Ovary (tissue), 10 donors: ENCODE measurements at regions of chr16 and their contacts with region 1.

Region 1: GRCh38 chr16:50548125-50548908 is at the start of gene NKD1:
- DNase-seq: peak; percentile 80 to 86 (median 84)
- H3K4me3 ChIP-seq: peak within 1 kb of the TSS; percentile 74
- H3K27ac ChIP-seq: peak within 1 kb of the TSS; percentile 51 to 68
- H3K4me1 ChIP-seq: peaks cover 4% of the 10 kb centered on the region
- H3K27me3 ChIP-seq: no peaks in the 10 kb centered on the region
- CTCF ChIP-seq: no peak
- EP300 ChIP-seq: no peak
- POLR2A ChIP-seq: peak; percentile 56
- total RNA-seq, gene NKD1: 3.3 to 72.1 (median 17.4) TPM

Region 2: DNA sequence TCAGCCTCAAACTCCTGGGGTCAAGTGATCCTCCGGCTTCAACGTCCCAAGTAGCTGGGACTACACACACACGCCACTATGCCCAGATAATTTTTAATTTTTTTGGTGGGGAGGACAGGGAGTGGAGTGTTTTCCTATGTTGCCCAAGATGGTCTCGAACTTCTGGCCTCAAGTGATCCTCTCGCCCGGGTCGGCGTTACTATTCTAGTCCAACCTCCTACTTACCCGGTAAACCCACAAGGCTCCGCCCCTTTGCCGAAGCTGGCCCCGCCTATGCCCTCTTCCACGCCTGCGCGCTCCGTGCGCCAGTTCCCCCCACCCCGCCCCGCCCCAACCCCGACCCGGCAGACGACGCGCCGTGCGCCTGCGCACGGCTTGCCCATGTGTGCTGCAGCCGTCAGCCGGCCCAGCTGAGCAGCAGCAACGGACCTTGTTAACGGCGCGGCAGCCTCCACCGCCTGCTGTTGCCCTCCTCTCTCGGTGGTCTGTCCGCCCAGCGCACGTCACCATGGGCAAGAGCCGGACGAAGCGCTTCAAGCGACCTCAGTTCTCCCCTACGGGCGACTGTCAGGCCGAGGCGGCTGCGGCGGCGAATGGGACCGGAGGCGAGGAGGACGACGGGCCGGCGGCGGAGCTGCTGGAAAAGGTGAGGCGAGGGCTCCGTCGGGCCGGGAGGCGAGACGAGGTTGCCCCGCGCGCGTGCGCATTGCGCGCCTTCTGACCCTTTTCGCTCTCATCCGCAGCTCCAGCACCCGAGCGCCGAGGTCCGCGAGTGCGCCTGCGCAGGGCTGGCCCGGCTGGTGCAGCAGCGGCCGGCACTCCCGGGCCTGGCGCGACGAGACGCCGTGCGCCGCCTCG is 482.5 kb before region 1 on chr16 and contains the start of gene HEATR3:
- intact Hi-C with region 1: loop called in 1 of 4 experiments (anchors 5 kb)
- DNase-seq: peak; percentile 91 to 97 (median 94)
- H3K4me3 ChIP-seq: peak within 1 kb of the TSS; percentile 76
- H3K27ac ChIP-seq: peak within 1 kb of the TSS; percentile 84 to 90
- H3K4me1 ChIP-seq: peaks cover 1% of the 10 kb centered on the region
- H3K27me3 ChIP-seq: no peaks in the 10 kb centered on the region
- CTCF ChIP-seq: no peak
- EP300 ChIP-seq: peak; percentile 18
- POLR2A ChIP-seq: no peak
- total RNA-seq, gene HEATR3: 7.6 to 15.2 (median 10.7) TPM

Region 3: DNA sequence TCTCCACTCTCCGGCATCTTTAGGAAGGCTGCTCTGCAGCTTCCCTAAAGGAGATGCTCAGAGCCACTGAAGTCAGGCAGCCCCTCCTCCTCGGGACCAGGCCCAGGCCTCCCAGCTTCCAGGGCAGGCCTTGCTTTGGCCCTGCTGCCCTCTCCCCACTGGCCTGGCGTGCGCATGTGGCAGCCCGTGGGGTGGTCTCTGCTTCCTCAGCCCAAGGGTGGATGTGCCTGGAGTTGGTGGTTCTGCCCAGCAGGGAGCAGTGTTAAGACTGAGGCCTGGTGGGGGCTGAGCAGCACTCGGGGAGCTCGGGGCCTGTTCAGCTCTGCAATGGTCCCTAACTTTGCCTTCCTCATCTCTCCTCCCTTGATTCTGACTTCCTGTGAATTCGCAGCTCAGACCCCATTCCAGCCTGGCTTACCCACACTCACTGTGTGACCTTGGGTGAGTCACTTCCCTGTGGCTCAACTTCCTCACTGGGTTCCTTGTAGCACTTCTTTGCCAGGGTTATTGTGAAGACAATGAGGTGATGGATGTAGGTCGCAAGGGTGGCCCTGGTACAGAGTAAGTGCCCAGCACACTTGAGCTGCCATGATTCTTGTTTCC is 63.1 kb after region 1 on chr16:
- intact Hi-C with region 1: loop called in 1 of 4 experiments (anchors 5 kb)
- DNase-seq: no peak
- H3K4me3 ChIP-seq: no peak overlapping the region
- H3K27ac ChIP-seq: no peak overlapping the region
- H3K4me1 ChIP-seq: peaks cover 24% of the 10 kb centered on the region
- H3K27me3 ChIP-seq: no peaks in the 10 kb centered on the region
- CTCF ChIP-seq: no peak
- EP300 ChIP-seq: no peak
- POLR2A ChIP-seq: no peak

Region 4: DNA sequence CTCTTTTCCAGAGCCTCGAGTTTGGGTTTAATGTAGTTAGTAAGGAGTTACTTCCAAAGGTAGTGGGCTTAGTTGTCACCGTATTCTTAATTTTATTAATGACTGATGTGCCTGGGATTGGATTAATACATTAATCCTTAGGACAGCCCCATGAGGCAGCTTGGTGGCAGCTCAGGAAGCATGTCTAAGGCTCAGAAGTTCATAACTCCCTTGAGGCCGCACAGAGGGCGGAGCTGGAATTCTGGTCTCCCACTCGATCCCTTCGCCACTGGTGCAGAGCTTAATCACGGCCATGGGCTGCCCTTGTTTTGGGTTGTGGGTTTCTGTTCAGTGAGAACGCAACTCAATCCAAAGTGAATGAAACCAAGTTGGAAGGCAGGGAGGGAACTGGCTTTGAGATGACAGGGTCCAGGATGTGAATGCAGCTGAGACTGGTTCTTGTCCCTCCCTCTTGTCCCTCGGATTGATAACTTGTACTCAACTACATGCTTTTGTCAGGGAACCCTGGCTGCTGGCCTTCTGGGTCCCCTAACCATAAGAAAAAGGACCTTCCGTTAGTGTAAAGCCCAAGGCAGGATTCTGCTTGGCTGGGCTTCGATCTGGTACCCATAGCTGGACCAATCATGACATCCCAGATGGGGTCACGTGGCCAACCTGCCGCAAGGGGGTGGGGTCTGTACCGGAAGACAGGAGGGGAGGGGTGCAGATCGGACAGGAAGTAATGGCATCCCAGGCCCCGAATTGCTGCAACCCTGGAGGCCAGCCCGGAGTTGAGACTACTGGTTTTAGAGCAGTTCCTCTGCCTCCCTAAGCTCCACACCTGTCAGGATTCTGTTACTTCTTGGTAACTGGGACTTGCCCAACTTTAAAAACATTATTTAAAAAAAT is 87.4 kb after region 1 on chr16:
- intact Hi-C with region 1: loop called in 1 of 4 experiments (anchors 5 kb)
- DNase-seq: no peak
- H3K4me3 ChIP-seq: no peak overlapping the region
- H3K27ac ChIP-seq: no peak overlapping the region
- H3K4me1 ChIP-seq: no peaks in the 10 kb centered on the region
- H3K27me3 ChIP-seq: no peaks in the 10 kb centered on the region
- CTCF ChIP-seq: no peak
- EP300 ChIP-seq: no peak
- POLR2A ChIP-seq: no peak

Region 5: DNA sequence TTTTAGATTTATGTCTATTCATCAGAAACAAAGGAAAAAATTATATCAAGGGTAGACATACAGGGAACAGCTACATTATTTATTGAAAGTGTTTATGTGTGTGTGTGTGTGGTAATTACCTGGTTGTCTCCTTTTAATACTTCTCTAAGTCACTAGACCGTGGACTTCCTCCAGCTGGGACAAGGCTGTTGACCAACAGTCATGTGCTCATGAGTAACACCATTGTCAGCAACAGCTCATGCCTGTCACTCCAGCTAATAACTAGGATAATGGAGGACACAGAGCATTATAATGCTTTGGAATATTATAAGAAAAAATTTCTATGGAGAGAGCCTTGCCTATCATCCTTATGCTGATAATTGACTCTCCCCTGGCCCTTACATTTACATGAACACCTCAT is 728.0 kb after region 1 on chr16:
- intact Hi-C with region 1: no loop called
- DNase-seq: no peak
- H3K4me3 ChIP-seq: no peak overlapping the region
- H3K27ac ChIP-seq: no peak overlapping the region
- H3K4me1 ChIP-seq: no peaks in the 10 kb centered on the region
- H3K27me3 ChIP-seq: no peaks in the 10 kb centered on the region
- CTCF ChIP-seq: no peak
- EP300 ChIP-seq: no peak
- POLR2A ChIP-seq: no peak